PC-9 (cell line): ENCODE measurements at regions of chr7 and their contacts with region 1.

Region 1: DNA sequence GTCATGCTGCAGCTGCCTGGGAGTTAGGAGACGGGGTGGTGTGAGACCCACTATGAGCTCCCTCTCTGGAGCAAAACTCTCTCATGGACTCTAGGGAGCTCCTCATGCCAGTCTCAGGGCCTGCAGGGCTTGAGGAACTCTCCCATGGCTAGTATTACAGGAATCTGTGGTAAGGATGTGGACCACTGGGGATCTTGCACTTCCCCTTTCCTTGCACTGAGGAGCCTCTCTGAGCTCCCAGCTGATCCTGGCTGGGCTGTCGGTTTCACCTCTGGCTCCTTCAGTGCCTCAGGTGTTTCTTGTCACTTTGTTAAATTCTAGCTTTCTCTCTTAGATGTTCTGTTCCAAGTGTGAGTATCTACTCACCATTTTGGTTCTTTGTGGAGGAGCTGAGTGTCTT is 71.6 kb upstream of the IMMP2L start:
- DNase-seq: no peak
- H3K4me3 ChIP-seq: no peak overlapping the region
- H3K27ac ChIP-seq: no peak overlapping the region
- H3K4me1 ChIP-seq: no peaks in the 10 kb centered on the region
- H3K27me3 ChIP-seq: no peaks in the 10 kb centered on the region
- CTCF ChIP-seq: no peak

Region 2: DNA sequence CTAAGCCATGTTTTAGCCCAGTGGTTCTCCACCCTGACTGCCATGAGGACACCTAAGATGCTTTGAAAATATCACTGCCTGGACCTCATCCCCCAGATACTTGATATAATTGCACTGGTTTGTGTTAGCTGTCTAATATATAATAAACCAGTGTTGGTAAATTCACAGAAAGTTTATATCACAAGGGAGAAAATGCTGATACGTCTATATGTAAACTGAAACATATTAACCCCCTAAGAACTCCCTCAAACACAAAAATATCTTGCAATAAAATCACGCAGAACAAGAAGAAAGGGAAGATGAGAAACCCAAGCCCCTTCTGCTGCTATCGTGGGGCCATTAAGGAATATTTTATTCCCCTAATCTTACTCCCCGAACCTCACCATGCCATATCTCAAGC is 79.8 kb before region 1 on chr7:
- CTCF ChIA-PET with region 1: no interaction called
- POLR2A ChIA-PET with region 1: no interaction called
- intact Hi-C with region 1: loop called (anchors 2 kb)
- DNase-seq: no peak
- H3K4me3 ChIP-seq: no peak overlapping the region
- H3K27ac ChIP-seq: no peak overlapping the region
- H3K4me1 ChIP-seq: no peaks in the 10 kb centered on the region
- H3K27me3 ChIP-seq: no peaks in the 10 kb centered on the region
- CTCF ChIP-seq: no peak

Region 3: DNA sequence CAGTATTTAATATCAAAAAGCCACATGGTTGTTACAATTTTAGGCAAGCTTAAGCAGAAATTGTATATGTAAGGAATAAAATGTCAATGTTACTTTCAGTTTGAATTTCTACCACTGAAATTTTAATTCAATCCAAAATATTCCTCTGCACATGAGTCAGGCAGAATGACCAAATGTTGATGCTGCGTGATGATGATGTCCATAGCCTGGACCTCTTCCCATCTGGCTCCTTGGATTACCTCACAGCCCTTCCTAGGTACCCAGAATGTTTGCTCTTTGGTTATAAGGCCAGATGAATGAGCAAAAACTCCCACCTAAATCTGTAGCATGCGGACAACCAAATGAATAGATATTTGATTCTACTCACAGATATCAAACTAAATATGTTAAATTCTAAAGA is 186.7 kb after region 1 on chr7:
- CTCF ChIA-PET with region 1: no interaction called
- POLR2A ChIA-PET with region 1: no interaction called
- intact Hi-C with region 1: no loop called
- DNase-seq: no peak
- H3K4me3 ChIP-seq: no peak overlapping the region
- H3K27ac ChIP-seq: no peak overlapping the region
- H3K4me1 ChIP-seq: no peaks in the 10 kb centered on the region
- H3K27me3 ChIP-seq: no peaks in the 10 kb centered on the region
- CTCF ChIP-seq: no peak